Endothelial cell of umbilical vein (primary cell): ENCODE measurements at regions of chr2 and their contacts with region 1.

Region 1: GRCh38 chr2:219521066-219521880 is 7.0 kb downstream of the ASIC4 start:
- DNase-seq: no peak
- H3K4me3 ChIP-seq: no peak overlapping the region
- H3K27ac ChIP-seq: no peak overlapping the region
- H3K4me1 ChIP-seq: no peaks in the 10 kb centered on the region
- H3K27me3 ChIP-seq: peaks cover 53 to 66% of the 10 kb centered on the region in 2 experiments
- CTCF ChIP-seq: peak; percentile 26 to 63
- POLR2A ChIP-seq: no peak

Region 2: DNA sequence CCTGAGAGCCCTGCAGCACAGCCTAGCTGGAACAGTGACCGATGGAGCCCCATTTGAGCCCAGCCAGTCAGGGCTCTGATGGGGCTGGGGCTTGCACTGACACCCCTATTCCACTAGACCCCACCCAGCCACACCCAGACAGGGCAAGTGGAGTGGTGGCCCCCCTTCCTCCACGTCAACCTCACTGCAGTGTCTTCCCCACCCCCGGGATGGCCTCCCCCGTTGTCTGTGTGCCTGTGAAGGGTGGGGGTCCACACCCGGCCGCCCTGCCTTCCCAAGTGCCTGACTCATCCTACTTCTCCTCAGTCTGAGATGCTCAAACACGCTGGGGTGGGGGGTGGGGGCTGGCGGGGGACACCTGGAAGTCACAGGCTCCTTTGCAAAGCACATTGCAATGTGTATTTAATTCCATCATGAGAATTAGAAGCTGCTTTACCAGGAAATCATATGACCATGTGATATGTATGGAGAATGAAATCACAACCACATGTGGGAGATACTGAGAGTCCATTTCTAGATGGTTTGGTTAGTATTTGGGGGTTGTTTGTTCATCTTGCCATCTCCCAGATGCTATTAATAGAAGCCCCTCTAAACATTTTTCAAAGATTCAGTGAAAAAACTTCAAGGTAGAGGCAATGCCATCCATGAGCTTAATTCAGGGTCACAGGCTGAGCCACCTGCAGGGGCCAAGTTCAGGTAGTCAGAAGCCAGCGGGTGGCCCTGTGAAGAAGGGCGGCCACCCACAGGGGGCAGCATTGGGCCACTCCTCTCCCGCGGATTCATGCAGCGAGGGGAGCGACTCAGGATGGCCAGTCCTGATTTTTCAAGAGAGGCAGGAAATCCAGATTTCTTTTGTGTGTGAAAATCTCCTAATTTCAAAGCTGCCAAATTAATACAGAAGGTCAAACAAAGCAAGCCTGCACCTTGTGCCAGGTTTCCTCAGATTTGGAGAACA is 45.3 kb before region 1 on chr2:
- CTCF ChIA-PET with region 1: no interaction called
- POLR2A ChIA-PET with region 1: no interaction called
- dilution Hi-C with region 1: no loop called
- intact Hi-C with region 1: loop called (anchors 2 kb)
- DNase-seq: peak; percentile 45
- H3K4me3 ChIP-seq: no peak overlapping the region
- H3K27ac ChIP-seq: no peak overlapping the region
- H3K4me1 ChIP-seq: no peaks in the 10 kb centered on the region
- H3K27me3 ChIP-seq: peaks cover 0 to 2% of the 10 kb centered on the region in 2 experiments
- CTCF ChIP-seq: peak; percentile 80 to 91
- POLR2A ChIP-seq: no peak

Region 3: DNA sequence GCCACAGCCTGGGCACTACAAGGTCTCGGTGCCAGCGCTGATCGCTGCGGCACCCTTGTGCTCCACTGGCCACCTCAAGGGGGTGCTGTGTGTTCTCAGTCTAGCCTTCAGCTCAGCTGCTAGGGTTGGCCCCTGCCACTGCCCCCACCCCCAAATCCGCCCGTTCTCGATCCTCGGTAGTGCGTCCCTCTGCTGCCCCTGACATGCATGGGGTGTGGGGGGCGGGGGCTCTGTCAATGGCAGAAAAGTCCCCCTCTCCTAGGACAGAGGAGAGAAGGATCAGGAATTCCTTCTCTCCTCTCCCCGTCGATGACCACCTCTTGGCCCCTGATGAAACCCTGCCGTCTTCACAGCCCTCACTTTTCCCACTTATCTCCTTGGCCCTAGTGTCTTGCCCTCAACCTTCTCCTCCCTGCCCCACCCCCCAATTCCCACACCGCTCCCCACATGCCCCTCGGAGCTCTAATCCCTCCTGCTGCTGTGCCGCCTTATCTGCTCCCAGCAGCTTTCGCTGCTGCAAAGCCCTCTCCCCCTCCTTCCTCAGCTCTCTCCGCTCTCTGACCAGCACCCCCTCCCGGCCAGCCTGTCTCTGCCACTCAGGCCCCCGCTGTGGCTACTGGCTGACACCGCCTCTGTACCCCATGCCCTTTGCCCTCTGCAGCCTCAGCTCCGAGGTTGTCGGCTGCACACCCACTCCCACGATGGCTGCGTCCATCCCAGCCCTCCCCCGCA is 11.3 kb before region 1 on chr2:
- CTCF ChIA-PET with region 1: interaction called, 67 read pairs
- POLR2A ChIA-PET with region 1: no interaction called
- dilution Hi-C with region 1: no loop called
- intact Hi-C with region 1: loop called (anchors 1 kb)
- DNase-seq: peak; percentile 60
- H3K4me3 ChIP-seq: peak overlapping the region in 1 of 3 experiments; percentile 1
- H3K27ac ChIP-seq: no peak overlapping the region
- H3K4me1 ChIP-seq: no peaks in the 10 kb centered on the region
- H3K27me3 ChIP-seq: peaks cover 42 to 43% of the 10 kb centered on the region in 2 experiments
- CTCF ChIP-seq: peak; percentile 68 to 84
- POLR2A ChIP-seq: no peak